PC-3 (cell line): ENCODE measurements at regions of chr16 and their contacts with region 1.

Region 1: DNA sequence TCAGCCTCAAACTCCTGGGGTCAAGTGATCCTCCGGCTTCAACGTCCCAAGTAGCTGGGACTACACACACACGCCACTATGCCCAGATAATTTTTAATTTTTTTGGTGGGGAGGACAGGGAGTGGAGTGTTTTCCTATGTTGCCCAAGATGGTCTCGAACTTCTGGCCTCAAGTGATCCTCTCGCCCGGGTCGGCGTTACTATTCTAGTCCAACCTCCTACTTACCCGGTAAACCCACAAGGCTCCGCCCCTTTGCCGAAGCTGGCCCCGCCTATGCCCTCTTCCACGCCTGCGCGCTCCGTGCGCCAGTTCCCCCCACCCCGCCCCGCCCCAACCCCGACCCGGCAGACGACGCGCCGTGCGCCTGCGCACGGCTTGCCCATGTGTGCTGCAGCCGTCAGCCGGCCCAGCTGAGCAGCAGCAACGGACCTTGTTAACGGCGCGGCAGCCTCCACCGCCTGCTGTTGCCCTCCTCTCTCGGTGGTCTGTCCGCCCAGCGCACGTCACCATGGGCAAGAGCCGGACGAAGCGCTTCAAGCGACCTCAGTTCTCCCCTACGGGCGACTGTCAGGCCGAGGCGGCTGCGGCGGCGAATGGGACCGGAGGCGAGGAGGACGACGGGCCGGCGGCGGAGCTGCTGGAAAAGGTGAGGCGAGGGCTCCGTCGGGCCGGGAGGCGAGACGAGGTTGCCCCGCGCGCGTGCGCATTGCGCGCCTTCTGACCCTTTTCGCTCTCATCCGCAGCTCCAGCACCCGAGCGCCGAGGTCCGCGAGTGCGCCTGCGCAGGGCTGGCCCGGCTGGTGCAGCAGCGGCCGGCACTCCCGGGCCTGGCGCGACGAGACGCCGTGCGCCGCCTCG is at the start of gene HEATR3:
- DNase-seq: peak; percentile 87
- ATAC-seq: peak; percentile 92
- H3K4me3 ChIP-seq: peak within 1 kb of the TSS; percentile 85
- H3K27ac ChIP-seq: peak within 1 kb of the TSS; percentile 80
- H3K4me1 ChIP-seq: peaks cover 9% of the 10 kb centered on the region
- H3K27me3 ChIP-seq: no peaks in the 10 kb centered on the region
- CTCF ChIP-seq: no peak
- total RNA-seq, gene HEATR3: 18.7 and 19.0 TPM in 2 replicates

Region 2: DNA sequence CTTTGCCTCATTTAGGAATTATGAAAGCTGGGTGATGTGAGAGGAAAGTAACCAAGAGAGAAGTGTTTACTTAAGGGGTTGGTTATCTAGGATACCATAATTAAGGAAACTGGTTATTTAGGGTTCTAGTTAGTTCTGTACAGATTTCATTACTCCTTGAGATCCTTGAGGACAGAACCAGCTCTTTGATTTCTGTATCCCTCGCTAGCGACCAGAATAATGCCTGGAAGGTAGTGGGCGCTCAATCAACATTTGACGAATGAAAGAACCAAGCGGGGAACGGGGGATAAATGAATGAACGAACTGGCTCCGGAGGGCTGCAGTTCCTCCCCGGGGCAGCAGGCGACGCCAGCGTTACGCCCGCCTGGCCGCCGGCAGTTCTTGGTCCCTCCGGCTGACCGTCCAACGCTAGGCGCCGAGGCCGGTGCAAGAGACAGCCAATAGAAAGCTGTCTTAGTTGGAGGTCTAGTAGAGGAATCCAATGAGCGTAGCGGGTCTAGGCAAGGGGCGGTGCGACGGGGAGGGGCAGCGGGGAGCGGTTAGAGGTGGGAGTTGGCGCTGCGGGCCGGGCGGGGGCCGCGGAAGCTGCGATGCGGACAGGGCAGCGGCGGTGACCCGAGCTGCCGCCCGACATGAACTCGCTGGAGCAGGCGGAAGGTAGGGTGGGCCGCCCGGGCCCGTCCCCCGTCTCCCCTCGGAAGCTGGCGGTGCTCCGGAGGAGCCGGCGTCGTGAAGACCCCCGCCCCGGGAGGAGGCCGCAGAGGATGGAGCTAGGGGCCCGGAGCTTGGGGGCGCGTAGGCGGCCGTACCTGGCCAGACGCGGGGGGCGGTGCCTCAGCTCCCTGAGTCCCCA is 40.9 kb before region 1 on chr16 and contains the start of gene CNEP1R1:
- CTCF ChIA-PET with region 1: interaction called, 4 read pairs
- POLR2A ChIA-PET with region 1: interaction called, 3 read pairs
- intact Hi-C with region 1: loop called (anchors 5 kb)
- DNase-seq: peak; percentile 93
- ATAC-seq: peak; percentile 93
- H3K4me3 ChIP-seq: peak within 1 kb of the TSS; percentile 95
- H3K27ac ChIP-seq: no peak within 1 kb of the TSS
- H3K4me1 ChIP-seq: peaks cover 6% of the 10 kb centered on the region
- H3K27me3 ChIP-seq: 0 out of 2 replicates have a peak, but pooled peaks cover 4% of the 10 kb centered on the region
- CTCF ChIP-seq: peak; percentile 91
- total RNA-seq, gene CNEP1R1: 7.0 and 10.5 TPM in 2 replicates

Region 3: DNA sequence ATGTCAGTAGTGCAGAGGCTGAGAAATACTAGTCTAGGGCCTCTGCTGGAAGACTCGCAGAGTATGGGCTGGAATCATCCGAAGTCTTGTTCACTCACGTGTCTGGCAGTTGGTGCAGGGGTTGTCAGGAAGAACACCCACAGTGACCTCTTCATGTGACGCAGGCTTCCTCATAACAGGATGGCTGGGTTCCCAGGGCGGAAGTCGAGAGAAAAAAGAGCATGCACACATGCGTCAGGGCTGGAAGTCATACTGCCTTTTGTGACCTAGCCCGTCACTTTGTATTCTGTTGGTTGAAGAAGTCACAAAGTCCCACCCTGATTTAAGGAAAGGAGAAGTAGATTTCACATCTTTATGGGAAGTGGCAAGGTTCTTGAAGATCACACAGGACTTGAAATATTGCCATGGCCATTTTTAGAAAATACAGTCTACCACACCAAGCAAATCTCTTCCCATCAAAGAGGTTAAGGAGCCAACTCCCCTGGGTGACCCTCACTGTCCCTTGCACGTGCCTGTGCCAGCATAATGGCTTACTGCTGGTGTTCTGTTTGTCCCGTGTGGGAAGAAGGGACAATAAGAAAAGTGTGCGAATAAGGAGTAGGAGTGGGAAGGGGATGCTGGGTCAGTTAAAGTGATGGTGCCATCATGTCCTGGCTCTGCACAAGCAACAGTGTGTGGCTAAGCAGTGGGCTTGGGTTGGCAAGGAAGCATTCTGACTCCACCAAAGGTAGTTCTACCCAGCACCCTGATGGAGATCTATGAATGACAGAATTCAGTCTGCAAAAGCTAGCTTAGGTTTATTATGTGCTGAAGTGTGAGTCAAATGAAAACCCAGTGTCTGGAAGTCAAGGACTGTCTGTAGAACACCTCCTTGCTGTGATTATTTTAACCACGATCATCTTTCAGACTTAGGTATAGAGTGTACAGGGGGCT is 28.0 kb after region 1 on chr16:
- CTCF ChIA-PET with region 1: no interaction called
- POLR2A ChIA-PET with region 1: no interaction called
- intact Hi-C with region 1: no loop called
- DNase-seq: no peak
- ATAC-seq: no peak
- H3K4me3 ChIP-seq: no peak overlapping the region
- H3K27ac ChIP-seq: no peak overlapping the region
- H3K4me1 ChIP-seq: no peaks in the 10 kb centered on the region
- H3K27me3 ChIP-seq: no peaks in the 10 kb centered on the region
- CTCF ChIP-seq: no peak

Region 4: DNA sequence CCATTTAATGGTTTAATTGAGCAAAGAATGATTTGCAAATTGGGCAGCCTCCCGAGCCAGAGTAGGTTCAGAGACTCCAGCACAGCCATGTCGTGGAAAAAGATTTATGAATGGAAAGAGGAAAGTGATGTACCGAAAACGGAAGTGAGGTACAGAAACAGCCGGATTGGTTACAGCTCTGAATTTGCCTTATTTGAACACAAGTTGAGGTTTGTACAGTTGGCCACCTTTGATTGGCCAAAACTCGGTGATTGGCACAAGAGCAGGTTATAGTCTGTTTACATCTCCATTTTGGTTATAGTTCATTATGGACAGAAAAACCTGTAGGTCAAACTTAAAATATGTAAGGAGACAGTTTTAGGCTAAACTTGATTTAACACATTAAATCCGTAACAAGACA is 131.7 kb after region 1 on chr16:
- CTCF ChIA-PET with region 1: no interaction called
- POLR2A ChIA-PET with region 1: interaction called, 10 read pairs
- intact Hi-C with region 1: no loop called
- DNase-seq: no peak
- ATAC-seq: no peak
- H3K4me3 ChIP-seq: no peak overlapping the region
- H3K27ac ChIP-seq: no peak overlapping the region
- H3K4me1 ChIP-seq: peaks cover 21% of the 10 kb centered on the region
- H3K27me3 ChIP-seq: no peaks in the 10 kb centered on the region
- CTCF ChIP-seq: no peak